MCF 10A (cell line): ENCODE measurements at regions of chr9 and their contacts with region 1.

Region 1: DNA sequence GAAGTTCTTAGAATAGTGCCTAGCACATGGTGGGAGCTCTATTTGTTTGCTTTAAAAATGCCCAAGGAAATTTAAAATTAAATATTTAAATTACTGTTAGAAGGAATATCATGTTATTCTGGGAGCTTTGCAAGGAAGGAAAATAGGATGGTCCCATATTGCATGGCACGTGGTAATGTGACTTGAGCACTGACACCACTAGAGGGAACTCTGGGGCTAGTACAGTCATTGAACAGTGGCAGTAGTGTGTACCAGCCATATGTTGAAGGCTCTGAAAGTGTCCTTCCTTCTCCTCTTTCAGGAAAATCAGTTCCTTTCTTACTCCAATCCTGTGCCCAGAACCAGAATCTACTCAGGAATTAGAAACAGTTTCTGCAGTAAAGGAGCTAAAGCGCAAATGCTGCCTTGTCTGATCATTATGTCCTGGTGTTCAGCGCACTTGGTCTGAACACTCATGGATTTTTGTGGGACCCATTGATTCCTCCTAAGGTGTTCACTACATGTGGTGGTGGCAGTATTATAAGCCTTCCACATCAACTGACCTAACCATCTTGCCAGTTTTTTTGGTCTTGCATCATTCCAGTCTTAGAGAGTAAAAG is 54.1 kb downstream of the GDA start:
- DNase-seq: peak; percentile 73
- H3K4me3 Mint-ChIP-seq: no peak overlapping the region
- H3K27ac Mint-ChIP-seq: no peak overlapping the region
- H3K4me1 Mint-ChIP-seq: no peaks in the 10 kb centered on the region
- H3K27me3 Mint-ChIP-seq: peaks cover 20% of the 10 kb centered on the region
- CTCF ChIP-seq: peak; percentile 58

Region 2: DNA sequence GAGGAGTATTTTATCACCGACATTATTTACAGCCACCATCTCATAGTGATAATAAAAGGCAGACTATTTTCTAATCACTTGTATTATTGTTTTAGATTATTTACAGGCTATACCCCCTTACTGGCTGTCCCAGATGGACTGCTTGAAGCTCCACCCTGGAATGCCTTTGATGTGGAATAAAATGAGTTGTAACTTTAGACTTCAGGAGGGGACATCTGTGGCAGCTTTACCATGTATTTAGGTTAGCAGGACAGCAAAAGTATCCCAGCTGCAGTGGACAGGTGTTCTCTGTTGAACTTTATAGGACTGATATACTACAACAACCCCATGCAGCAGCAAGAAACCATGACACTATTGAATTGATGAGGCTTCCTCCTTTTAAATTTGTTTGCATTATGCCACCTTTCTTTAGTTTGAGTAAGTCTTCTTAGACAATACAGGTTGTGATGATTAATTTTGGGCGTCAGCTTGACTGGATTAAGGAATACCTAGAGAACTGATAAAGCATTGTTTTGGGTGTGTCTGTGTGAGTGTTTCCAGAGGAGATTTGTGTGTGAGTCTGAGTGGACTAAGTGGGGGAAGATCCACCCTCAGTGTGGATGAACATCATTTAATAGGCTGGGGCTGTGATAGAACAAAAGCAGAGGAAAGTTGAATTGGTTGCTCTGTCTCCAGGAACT is 113.7 kb before region 1 on chr9:
- CTCF ChIA-PET with region 1: no interaction called
- POLR2A ChIA-PET with region 1: no interaction called
- intact Hi-C with region 1: no loop called
- DNase-seq: no peak
- H3K4me3 Mint-ChIP-seq: no peak overlapping the region
- H3K27ac Mint-ChIP-seq: no peak overlapping the region
- H3K4me1 Mint-ChIP-seq: peaks cover 6% of the 10 kb centered on the region
- H3K27me3 Mint-ChIP-seq: no peaks in the 10 kb centered on the region
- CTCF ChIP-seq: no peak

Region 3: GRCh38 chr9:72173081-72173480 is 30.2 kb before region 1 on chr9:
- CTCF ChIA-PET with region 1: interaction called, 10 read pairs
- POLR2A ChIA-PET with region 1: no interaction called
- intact Hi-C with region 1: no loop called
- DNase-seq: peak; percentile 29
- H3K4me3 Mint-ChIP-seq: no peak overlapping the region
- H3K27ac Mint-ChIP-seq: no peak overlapping the region
- H3K4me1 Mint-ChIP-seq: no peaks in the 10 kb centered on the region
- H3K27me3 Mint-ChIP-seq: no peaks in the 10 kb centered on the region
- CTCF ChIP-seq: no peak

Region 4: GRCh38 chr9:72217306-72217842 is 14.1 kb after region 1 on chr9:
- CTCF ChIA-PET with region 1: interaction called, 14 read pairs
- POLR2A ChIA-PET with region 1: no interaction called
- intact Hi-C with region 1: no loop called
- DNase-seq: peak; percentile 16
- H3K4me3 Mint-ChIP-seq: no peak overlapping the region
- H3K27ac Mint-ChIP-seq: no peak overlapping the region
- H3K4me1 Mint-ChIP-seq: peaks cover 6% of the 10 kb centered on the region
- H3K27me3 Mint-ChIP-seq: peaks cover 26% of the 10 kb centered on the region
- CTCF ChIP-seq: no peak

Region 5: DNA sequence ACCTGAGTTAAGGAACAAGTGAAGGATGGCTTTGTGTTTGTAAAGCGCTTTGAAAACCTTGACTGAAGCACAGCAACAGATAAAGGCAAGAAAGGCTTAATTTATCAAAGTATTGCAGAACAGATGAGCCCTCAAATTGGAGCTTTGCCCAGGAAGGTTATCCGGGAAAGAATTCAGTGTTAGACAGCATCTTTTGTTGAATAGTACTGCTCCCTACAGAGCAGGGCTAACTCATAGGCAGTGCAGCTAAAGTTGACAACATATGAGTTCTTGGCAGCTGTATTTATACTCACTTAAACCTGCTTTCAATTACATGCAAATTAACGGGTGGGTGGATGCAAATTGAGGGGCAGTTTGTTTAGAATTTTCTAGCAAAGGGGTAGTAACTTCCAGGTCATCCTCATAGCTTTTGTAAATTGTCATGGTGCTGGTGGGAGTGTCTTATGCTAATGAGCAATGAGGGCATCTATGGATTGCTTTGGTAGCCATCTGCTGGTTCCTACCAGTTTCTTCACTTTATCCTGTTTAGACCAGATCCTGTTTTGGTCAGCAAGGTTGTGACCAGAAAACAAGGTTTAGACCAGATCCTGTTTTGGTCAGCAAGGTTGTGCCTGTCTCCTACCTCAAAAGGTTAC is 51.7 kb after region 1 on chr9:
- CTCF ChIA-PET with region 1: interaction called, 15 read pairs
- POLR2A ChIA-PET with region 1: no interaction called
- intact Hi-C with region 1: no loop called
- DNase-seq: peak; percentile 47
- H3K4me3 Mint-ChIP-seq: no peak overlapping the region
- H3K27ac Mint-ChIP-seq: no peak overlapping the region
- H3K4me1 Mint-ChIP-seq: peaks cover 8% of the 10 kb centered on the region
- H3K27me3 Mint-ChIP-seq: peaks cover 21% of the 10 kb centered on the region
- CTCF ChIP-seq: no peak

Region 6: DNA sequence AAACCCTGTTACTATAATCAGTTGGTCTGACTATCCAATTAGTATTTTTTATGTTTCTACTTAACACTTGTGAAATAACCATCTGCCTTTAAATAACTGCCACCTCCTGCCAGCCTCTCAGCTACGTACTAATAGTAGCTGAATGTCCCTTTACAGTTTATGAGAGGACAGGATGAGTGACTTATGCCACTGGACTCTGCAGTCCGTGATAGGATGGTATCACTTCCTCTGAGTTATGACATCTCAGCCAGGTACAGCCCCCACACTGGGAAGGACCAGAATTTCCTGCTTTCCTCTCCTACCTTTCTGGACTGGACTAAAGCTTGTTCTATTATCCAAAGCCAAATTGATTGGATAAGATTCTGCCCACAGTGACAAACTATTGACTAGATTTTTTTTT is 58.8 kb after region 1 on chr9:
- CTCF ChIA-PET with region 1: interaction called, 11 read pairs
- POLR2A ChIA-PET with region 1: no interaction called
- intact Hi-C with region 1: no loop called
- DNase-seq: no peak
- H3K4me3 Mint-ChIP-seq: no peak overlapping the region
- H3K27ac Mint-ChIP-seq: no peak overlapping the region
- H3K4me1 Mint-ChIP-seq: no peaks in the 10 kb centered on the region
- H3K27me3 Mint-ChIP-seq: no peaks in the 10 kb centered on the region
- CTCF ChIP-seq: no peak

Region 7: DNA sequence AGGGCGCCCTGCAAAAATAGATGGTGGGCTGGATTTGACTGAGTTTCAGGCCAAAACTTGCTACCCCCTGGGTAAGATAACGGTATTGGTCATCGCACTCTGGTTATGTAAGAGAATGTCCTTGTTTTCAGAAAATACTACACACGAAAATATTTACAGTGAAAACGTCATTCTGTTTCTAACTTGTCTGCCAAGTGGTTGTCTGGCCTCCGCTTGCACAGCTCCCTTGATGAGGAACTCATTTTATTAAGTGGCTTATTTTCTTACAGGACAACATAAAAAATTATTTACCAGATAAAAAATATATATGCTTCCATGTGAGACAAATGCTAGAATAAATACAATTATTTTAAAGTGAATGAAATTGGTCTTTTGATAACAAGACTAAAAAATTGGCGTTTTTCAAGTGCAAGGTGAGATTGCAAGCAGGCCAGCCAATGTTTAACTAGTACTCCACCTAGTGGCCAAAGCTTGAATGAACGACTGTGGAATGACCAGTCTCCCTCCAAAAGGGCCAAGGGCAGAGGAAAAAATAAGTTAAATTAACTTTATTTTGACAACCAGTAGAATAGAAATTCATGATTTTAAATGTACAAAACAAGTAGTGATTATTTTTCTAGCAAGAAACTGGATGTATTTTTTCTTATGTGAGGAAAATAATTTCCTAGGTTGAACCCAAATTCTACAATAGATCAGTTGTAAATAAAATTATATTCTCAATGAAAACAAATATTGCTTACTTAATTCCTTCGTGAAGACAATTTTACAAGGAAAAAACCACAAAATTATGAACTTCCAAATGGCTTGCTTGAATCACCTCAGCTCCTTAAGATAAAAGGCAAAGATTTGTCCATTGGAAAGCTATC is 68.5 kb after region 1 on chr9:
- CTCF ChIA-PET with region 1: interaction called, 94 read pairs
- POLR2A ChIA-PET with region 1: interaction called, 5 read pairs
- intact Hi-C with region 1: loop called (anchors 1 kb)
- DNase-seq: peak; percentile 77
- H3K4me3 Mint-ChIP-seq: no peak overlapping the region
- H3K27ac Mint-ChIP-seq: no peak overlapping the region
- H3K4me1 Mint-ChIP-seq: peaks cover 6% of the 10 kb centered on the region
- H3K27me3 Mint-ChIP-seq: no peaks in the 10 kb centered on the region
- CTCF ChIP-seq: peak; percentile 74

Region 8: DNA sequence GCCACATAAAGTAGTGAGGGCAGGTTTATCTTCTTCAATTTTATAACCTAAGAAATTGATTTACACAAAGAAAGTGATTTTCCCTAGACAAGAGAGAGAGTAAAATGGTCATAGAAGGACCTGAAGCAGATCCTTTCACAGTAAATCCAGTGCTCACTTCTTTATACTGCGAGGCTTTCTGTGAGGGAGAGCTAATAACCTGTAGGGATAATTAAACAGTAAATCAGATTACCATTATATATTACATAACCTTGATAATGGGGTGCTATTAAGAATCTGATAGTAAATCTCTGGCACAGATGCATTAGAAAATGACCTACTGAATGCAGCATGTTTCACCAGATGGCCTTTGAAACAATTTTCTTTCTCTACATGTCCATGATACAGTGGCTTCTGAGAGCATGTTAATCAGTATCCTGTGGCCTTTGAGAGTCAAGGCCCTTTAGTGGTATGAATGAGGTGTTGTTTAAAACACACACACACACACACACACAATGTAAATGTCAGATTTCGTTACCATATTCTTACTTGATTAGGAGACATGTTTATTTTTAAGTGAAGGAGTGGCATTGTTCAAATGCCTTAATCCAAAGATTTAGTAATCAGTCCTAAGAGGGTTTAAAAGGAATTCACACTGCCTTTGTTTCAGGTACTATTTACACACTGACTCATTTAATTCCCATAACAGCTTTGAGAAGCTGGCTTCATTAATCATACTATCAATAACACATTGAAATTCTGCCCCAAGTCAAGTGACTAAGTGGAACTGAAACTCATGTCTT is 624.8 kb after region 1 on chr9:
- CTCF ChIA-PET with region 1: interaction called, 6 read pairs
- POLR2A ChIA-PET with region 1: no interaction called
- intact Hi-C with region 1: loop called (anchors 2 kb)
- DNase-seq: peak; percentile 78
- H3K4me3 Mint-ChIP-seq: no peak overlapping the region
- H3K27ac Mint-ChIP-seq: peak overlapping the region; percentile 72
- H3K4me1 Mint-ChIP-seq: peaks cover 14% of the 10 kb centered on the region
- H3K27me3 Mint-ChIP-seq: peaks cover 3% of the 10 kb centered on the region
- CTCF ChIP-seq: no peak

Region 9: DNA sequence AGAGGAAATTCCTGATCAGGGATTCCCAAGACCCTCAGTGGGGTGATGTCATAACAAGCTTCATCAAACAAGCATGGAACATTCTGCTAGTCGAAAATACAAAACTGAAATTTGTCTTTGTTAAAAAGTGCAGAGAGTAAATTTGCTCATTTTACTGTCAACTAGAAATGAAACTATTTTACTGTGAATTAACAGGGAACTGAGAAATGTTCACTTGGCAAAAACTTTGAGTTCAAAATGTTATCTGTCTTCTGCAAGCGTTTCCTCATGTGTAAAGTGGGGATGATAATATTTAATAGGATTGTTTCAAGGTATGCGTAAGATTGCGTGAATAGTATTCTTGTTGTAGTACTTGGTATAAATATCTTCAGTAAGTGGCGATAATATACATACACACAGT is 704.1 kb after region 1 on chr9:
- CTCF ChIA-PET with region 1: no interaction called
- POLR2A ChIA-PET with region 1: no interaction called
- intact Hi-C with region 1: no loop called
- DNase-seq: no peak
- H3K4me3 Mint-ChIP-seq: no peak overlapping the region
- H3K27ac Mint-ChIP-seq: no peak overlapping the region
- H3K4me1 Mint-ChIP-seq: no peaks in the 10 kb centered on the region
- H3K27me3 Mint-ChIP-seq: peaks cover 50% of the 10 kb centered on the region
- CTCF ChIP-seq: no peak